Activated CD8-positive, alpha-beta T cell treated with anti-CD3 and anti-CD28 coated beads for 36 hours (primary cell): ENCODE measurements at regions of chr17 and their contacts with region 1.

Region 1: GRCh38 chr17:1203111-1203966 is 23.6 kb upstream of the ABR start:
- DNase-seq: peak; percentile 59
- ATAC-seq: peak; percentile 45
- H3K4me3 Mint-ChIP-seq: no peak overlapping the region
- H3K27ac Mint-ChIP-seq: no peak overlapping the region
- H3K4me1 Mint-ChIP-seq: peaks cover 33% of the 10 kb centered on the region
- H3K27me3 Mint-ChIP-seq: no peaks in the 10 kb centered on the region
- CTCF ChIP-seq: no peak

Region 2: GRCh38 chr17:1147661-1148060 is 55.7 kb before region 1 on chr17:
- CTCF ChIA-PET with region 1: no interaction called
- POLR2A ChIA-PET with region 1: no interaction called
- intact Hi-C with region 1: no loop called
- DNase-seq: no peak
- ATAC-seq: no peak
- H3K4me3 Mint-ChIP-seq: no peak overlapping the region
- H3K27ac Mint-ChIP-seq: no peak overlapping the region
- H3K4me1 Mint-ChIP-seq: no peaks in the 10 kb centered on the region
- H3K27me3 Mint-ChIP-seq: no peaks in the 10 kb centered on the region
- CTCF ChIP-seq: no peak

Region 3: DNA sequence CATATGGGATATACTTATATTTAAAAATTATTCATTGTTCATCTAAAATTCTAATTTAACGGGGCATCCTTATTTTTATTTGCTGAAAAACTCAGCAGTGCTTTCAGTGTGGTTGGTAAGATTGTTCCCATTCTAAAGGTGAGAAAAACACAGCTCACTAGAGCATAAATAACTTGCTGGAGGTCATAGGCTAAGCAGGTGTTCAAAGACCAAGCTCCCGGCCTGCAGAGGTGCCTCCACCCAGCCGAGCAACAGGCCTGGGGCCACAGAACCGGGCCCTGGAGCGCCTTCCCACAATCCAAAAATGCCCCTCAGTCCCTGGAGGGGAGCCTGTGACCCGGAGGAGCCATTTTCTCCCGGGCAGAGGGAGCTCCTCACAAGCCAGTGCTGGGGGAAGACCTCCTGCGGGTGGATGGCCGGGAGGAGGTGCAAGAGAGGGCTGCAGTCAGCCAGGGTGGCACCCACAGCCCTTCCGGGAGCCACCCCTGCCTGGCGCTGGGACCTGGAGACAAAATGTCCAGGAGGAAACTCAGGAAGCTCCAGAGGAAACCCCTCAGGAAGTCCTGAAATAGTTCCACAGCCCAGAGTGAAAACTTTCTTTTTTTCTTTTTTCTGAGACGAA is 38.3 kb before region 1 on chr17:
- CTCF ChIA-PET with region 1: no interaction called
- POLR2A ChIA-PET with region 1: no interaction called
- intact Hi-C with region 1: no loop called
- DNase-seq: no peak
- ATAC-seq: no peak
- H3K4me3 Mint-ChIP-seq: no peak overlapping the region
- H3K27ac Mint-ChIP-seq: no peak overlapping the region
- H3K4me1 Mint-ChIP-seq: peaks cover 4% of the 10 kb centered on the region
- H3K27me3 Mint-ChIP-seq: no peaks in the 10 kb centered on the region
- CTCF ChIP-seq: no peak

Region 4: GRCh38 chr17:1179112-1179817 is 24.1 kb before region 1 on chr17:
- CTCF ChIA-PET with region 1: no interaction called
- POLR2A ChIA-PET with region 1: interaction called, 12 read pairs
- intact Hi-C with region 1: no loop called
- DNase-seq: peak; percentile 21
- ATAC-seq: peak; percentile 24
- H3K4me3 Mint-ChIP-seq: peak overlapping the region; percentile 67
- H3K27ac Mint-ChIP-seq: no peak overlapping the region
- H3K4me1 Mint-ChIP-seq: peaks cover 15% of the 10 kb centered on the region
- H3K27me3 Mint-ChIP-seq: peaks cover 2% of the 10 kb centered on the region
- CTCF ChIP-seq: no peak

Region 5: DNA sequence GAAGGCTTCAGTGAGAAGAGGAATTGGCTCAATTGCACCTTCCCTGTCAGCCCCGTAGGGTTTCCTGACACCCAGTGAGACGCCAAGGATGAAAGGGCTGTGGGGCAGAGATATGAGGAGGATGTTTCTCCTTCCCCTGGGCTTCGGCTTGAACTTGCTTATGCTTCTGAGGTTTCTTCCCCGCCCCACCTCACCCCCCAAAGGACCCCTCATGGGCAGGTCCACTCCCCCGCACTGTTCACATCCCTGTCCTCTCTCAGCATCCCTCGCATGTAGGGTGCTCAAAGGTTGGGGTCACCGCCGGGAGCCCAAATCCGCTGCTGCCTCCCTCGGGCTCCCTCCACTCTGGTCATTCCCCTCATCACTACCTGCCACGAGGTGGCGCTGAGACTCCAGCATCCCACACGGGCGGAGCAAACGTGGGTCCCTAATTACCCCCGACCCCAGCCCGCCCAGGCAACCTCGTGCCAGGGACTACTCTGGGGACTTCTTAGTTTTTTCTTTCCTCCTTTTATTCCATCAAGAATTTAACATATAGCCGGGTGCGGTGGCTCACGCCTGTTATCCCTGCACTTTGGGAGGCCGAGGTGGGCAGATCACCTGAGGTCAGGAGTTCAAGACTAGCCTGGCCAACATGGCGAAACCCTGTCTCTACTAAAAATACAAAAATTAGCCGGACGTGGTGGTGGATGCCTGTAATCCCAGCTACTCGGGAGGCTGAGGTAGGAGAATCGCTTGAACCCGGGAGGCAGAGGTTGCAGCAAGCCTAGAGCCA is 72.8 kb after region 1 on chr17:
- CTCF ChIA-PET with region 1: no interaction called
- POLR2A ChIA-PET with region 1: no interaction called
- intact Hi-C with region 1: no loop called
- DNase-seq: peak; percentile 83
- ATAC-seq: peak; percentile 94
- H3K4me3 Mint-ChIP-seq: no peak overlapping the region
- H3K27ac Mint-ChIP-seq: no peak overlapping the region
- H3K4me1 Mint-ChIP-seq: peaks cover 3% of the 10 kb centered on the region
- H3K27me3 Mint-ChIP-seq: peaks cover 27% of the 10 kb centered on the region
- CTCF ChIP-seq: peak; percentile 93